CD14-positive monocyte (primary cell): ENCODE measurements at regions of chrX and their contacts with region 1.

Region 1: GRCh38 chrX:104935581-104935980 is 284.9 kb downstream of the TEX13A start:
- DNase-seq: no peak
- H3K4me3 ChIP-seq: no peak overlapping the region
- H3K4me3 Mint-ChIP-seq: no peak overlapping the region
- H3K27ac ChIP-seq: no peak overlapping the region
- H3K27ac Mint-ChIP-seq: no peak overlapping the region
- H3K4me1 ChIP-seq: no peaks in the 10 kb centered on the region
- H3K4me1 Mint-ChIP-seq: no peaks in the 10 kb centered on the region
- H3K27me3 ChIP-seq: no peaks in the 10 kb centered on the region
- H3K27me3 Mint-ChIP-seq: peaks cover 0 to 5% (median 2%) of the 10 kb centered on the region in 3 donors
- CTCF ChIP-seq: no peak

Region 2: DNA sequence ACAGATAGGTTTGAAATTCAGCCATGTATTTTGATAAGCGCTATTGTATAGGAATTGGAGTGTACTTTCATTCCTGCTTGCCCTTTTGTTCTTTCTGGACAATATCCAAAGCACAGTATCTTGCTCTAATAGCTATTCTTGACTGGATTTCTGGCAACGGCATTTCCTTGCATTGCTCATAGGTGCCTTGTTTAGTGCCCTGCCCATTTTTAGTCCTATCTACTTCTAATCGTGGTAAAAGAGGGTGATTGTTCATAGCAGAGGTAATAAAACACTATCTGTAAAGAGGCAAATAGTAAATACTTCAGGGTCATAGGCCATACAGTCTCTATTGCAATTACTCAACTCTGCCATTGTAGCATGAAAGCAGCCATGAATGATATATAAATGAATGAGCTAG is 213.7 kb before region 1 on chrX:
- intact Hi-C with region 1: no loop called
- DNase-seq: no peak
- H3K4me3 ChIP-seq: no peak overlapping the region
- H3K4me3 Mint-ChIP-seq: no peak overlapping the region
- H3K27ac ChIP-seq: no peak overlapping the region
- H3K27ac Mint-ChIP-seq: no peak overlapping the region
- H3K4me1 ChIP-seq: no peaks in the 10 kb centered on the region
- H3K4me1 Mint-ChIP-seq: no peaks in the 10 kb centered on the region
- H3K27me3 ChIP-seq: no peaks in the 10 kb centered on the region
- H3K27me3 Mint-ChIP-seq: peaks cover 0 to 2% (median 0%) of the 10 kb centered on the region in 3 donors
- CTCF ChIP-seq: no peak

Region 3: GRCh38 chrX:104961926-104962325 is 26.3 kb after region 1 on chrX:
- intact Hi-C with region 1: loop called in 1 of 2 experiments (anchors 2 kb)
- DNase-seq: no peak
- H3K4me3 ChIP-seq: no peak overlapping the region
- H3K4me3 Mint-ChIP-seq: no peak overlapping the region
- H3K27ac ChIP-seq: no peak overlapping the region
- H3K27ac Mint-ChIP-seq: no peak overlapping the region
- H3K4me1 ChIP-seq: no peaks in the 10 kb centered on the region
- H3K4me1 Mint-ChIP-seq: no peaks in the 10 kb centered on the region
- H3K27me3 ChIP-seq: no peaks in the 10 kb centered on the region
- H3K27me3 Mint-ChIP-seq: peaks cover 0 to 2% (median 0%) of the 10 kb centered on the region in 3 donors
- CTCF ChIP-seq: no peak